ENCODE measurements at regions of chr17 and their contacts with region 1.

Region 1: DNA sequence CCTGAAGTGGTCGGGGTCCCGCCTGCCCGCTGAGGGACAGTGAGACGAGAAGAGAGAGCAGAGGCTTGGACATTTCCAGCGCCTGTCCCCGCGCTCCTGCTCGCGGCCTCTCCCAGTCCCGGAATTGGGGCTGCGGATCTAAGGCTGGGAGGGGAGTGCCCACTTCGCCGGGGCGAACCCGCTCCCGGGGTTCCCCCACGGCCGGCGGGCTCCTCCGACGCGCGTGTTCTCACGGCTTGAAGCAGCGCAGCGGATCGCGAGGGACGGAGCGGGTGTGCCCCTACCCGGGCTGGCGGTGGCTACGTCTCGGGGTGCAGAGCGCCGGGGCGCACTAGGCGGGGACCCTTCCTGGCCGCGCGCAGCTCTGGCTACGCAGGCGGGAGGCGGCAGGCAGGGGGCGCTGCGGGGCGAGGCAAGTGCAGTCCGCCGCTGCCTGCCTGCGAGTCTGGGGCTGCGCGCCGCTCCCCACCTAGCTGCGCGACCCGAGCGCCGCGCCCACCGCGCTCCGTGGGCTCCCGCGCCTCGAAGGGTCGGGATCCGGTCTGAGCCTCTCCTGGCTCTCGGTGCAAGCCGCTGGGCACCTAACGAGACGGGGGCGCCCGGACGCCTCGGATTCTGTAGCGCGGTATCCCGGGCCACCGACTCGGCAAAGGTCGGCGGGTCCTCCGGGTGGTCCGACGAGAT is 1.2 kb downstream of the NGFR start:
- DNase-seq: peak; percentile 72 to 83
- ATAC-seq: peak; percentile 73 to 92
- H3K4me3 ChIP-seq: peak overlapping the region; percentile 50
- H3K27ac ChIP-seq: peak overlapping the region in 1 of 2 experiments; percentile 47; a peak in 1 of 6 replicates
- H3K4me1 ChIP-seq: peaks cover 22% of the 10 kb centered on the region
- CTCF ChIP-seq: peak; percentile 95
- EP300 ChIP-seq: no peak
- POLR2A ChIP-seq: no peak
- RAD21 ChIP-seq: peak; percentile 39 to 67; a peak in 4 of 5 replicates

Region 2: GRCh38 chr17:49434821-49435670 is 61.3 kb before region 1 on chr17:
- CTCF ChIA-PET with region 1: interaction called, 25 read pairs
- POLR2A ChIA-PET with region 1: no interaction called
- DNase-seq: peak; percentile 73 to 95
- ATAC-seq: peak; percentile 72 to 91
- H3K4me3 ChIP-seq: no peak overlapping the region
- H3K27ac ChIP-seq: no peak overlapping the region
- H3K4me1 ChIP-seq: no peaks in the 10 kb centered on the region
- CTCF ChIP-seq: peak; percentile 83
- EP300 ChIP-seq: no peak
- POLR2A ChIP-seq: no peak
- RAD21 ChIP-seq: peak; percentile 80 to 82

Region 3: GRCh38 chr17:49465331-49465903 is 30.9 kb before region 1 on chr17:
- CTCF ChIA-PET with region 1: interaction called, 16 read pairs
- POLR2A ChIA-PET with region 1: no interaction called
- DNase-seq: no peak
- ATAC-seq: no peak
- H3K4me3 ChIP-seq: no peak overlapping the region
- H3K27ac ChIP-seq: no peak overlapping the region
- H3K4me1 ChIP-seq: no peaks in the 10 kb centered on the region
- CTCF ChIP-seq: no peak
- EP300 ChIP-seq: no peak
- POLR2A ChIP-seq: no peak
- RAD21 ChIP-seq: no peak

Region 4: GRCh38 chr17:49477709-49478108 is 18.6 kb before region 1 on chr17:
- CTCF ChIA-PET with region 1: interaction called, 62 read pairs
- POLR2A ChIA-PET with region 1: no interaction called
- DNase-seq: no peak
- ATAC-seq: no peak
- H3K4me3 ChIP-seq: no peak overlapping the region
- H3K27ac ChIP-seq: no peak overlapping the region
- H3K4me1 ChIP-seq: peaks cover 7% of the 10 kb centered on the region
- CTCF ChIP-seq: no peak
- EP300 ChIP-seq: no peak
- POLR2A ChIP-seq: no peak
- RAD21 ChIP-seq: no peak

Region 5: GRCh38 chr17:49515196-49515770 is 19.0 kb after region 1 on chr17:
- CTCF ChIA-PET with region 1: interaction called, 214 read pairs
- POLR2A ChIA-PET with region 1: no interaction called
- DNase-seq: peak; percentile 49 to 68
- ATAC-seq: peak; percentile 63 to 88
- H3K4me3 ChIP-seq: no peak overlapping the region
- H3K27ac ChIP-seq: peak overlapping the region; percentile 11 to 76; a peak in 3 of 6 replicates
- H3K4me1 ChIP-seq: 0 out of 3 replicates have a peak, but pooled peaks cover 6% of the 10 kb centered on the region
- CTCF ChIP-seq: no peak
- EP300 ChIP-seq: no peak
- POLR2A ChIP-seq: no peak
- RAD21 ChIP-seq: no peak

Region 6: DNA sequence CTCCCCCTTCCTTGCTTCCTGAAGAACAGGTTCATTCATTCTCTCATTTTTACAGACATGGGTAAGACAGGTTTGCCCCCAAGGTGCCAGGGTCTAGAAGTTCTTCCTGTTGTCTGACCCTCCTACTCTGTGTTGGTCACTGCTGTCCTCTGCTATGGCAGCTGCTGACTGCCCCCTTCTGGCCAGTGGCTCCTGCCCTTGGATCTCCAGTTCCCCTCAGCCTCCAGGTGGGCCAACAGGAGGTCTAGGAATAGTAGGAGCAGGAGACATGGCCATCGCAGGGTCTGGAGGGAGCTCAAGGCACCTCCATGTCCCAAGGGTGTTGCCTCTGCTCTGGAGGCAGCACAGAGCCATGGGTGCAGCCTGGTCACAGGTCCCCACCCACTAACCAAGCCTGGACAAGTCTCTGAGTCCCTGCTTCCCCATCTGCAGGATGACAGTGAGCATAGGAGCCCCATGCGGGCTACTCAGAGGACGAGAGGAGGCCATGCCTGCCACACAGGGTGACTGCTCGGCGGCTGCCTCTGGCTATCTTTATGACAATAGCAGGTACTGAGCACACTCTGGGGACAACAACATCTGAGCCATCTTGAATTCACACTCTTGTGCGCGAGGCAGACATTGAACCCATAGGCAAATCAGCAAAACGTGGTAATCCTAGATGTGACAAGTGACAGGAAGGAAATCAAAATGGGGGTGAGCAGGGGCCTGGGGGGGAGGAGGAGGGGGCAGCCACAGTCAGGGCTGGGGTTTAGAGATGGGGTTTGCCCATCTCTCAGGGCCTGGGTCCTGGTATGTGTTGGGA is 52.4 kb after region 1 on chr17:
- CTCF ChIA-PET with region 1: interaction called, 31 read pairs
- POLR2A ChIA-PET with region 1: no interaction called
- DNase-seq: peak; percentile 64 to 66
- ATAC-seq: peak; percentile 31 to 91; a peak in 3 of 6 replicates
- H3K4me3 ChIP-seq: no peak overlapping the region
- H3K27ac ChIP-seq: no peak overlapping the region
- H3K4me1 ChIP-seq: no peaks in the 10 kb centered on the region
- CTCF ChIP-seq: peak; percentile 60
- EP300 ChIP-seq: no peak
- POLR2A ChIP-seq: no peak
- RAD21 ChIP-seq: peak; percentile 71 to 86

Region 7: GRCh38 chr17:49822829-49823228 is 326.5 kb after region 1 on chr17:
- CTCF ChIA-PET with region 1: no interaction called
- POLR2A ChIA-PET with region 1: no interaction called
- DNase-seq: no peak
- ATAC-seq: no peak
- H3K4me3 ChIP-seq: no peak overlapping the region
- H3K27ac ChIP-seq: no peak overlapping the region
- H3K4me1 ChIP-seq: peaks cover under 1% of the 10 kb centered on the region
- CTCF ChIP-seq: no peak
- EP300 ChIP-seq: no peak
- POLR2A ChIP-seq: no peak
- RAD21 ChIP-seq: no peak